ENCODE measurements at regions of chr17 and their contacts with region 1.

Region 1: GRCh38 chr17:57849874-57850754 is at the start of gene MRPS23:
- DNase-seq: peak; percentile 91 to 99 (median 95)
- ATAC-seq: peak; percentile 94
- H3K4me3 ChIP-seq: peak within 1 kb of the TSS; percentile 74 to 82
- H3K4me3 Mint-ChIP-seq: peak within 1 kb of the TSS; percentile 95
- H3K27ac ChIP-seq: peak within 1 kb of the TSS; percentile 88 to 91
- H3K27ac Mint-ChIP-seq: peak within 1 kb of the TSS; percentile 100
- H3K4me1 ChIP-seq: peaks cover 32% of the 10 kb centered on the region
- H3K4me1 Mint-ChIP-seq: peaks cover 44% of the 10 kb centered on the region
- H3K27me3 ChIP-seq: no peaks in the 10 kb centered on the region
- H3K27me3 Mint-ChIP-seq: no peaks in the 10 kb centered on the region
- CTCF ChIP-seq: no peak
- total RNA-seq, gene MRPS23: 16.2 to 17.2 TPM

Region 2: DNA sequence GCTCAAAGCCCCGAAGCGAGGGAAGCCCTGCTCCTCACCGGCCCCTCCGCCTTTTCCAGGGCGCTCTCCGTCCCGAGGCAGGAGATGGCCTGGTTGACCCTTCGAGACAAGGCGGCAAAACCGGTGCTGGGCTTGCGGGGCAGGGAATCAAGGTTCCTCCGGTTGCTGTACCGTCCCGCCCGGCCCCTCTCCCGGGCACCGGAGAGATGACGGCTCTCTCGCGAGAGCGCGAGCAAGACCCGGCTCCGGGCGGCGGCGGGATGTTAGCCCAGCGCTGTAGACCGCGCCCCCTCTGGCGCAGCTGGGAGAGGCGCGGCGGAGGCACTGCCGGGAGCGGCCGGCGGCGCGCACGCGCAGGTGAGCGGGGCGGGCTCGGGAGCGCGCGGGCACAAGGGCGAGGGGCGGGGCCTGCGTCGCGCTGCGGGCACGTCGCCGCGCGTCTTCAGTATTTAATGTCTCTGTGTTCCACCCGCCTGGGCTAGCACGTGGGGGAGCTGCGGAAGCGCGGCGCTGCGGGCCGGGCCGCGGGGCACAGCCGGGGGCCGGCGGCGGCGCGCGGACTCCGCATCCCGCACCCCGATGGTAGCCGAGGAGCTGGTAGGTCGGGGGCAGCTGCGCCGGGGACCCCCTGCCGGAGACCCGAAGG is 765.2 kb before region 1 on chr17 and contains the start of gene AKAP1:
- CTCF ChIA-PET with region 1: no interaction called
- POLR2A ChIA-PET with region 1: interaction called, 3 read pairs
- intact Hi-C with region 1: loop called in 1 of 2 experiments (anchors 1 kb)
- DNase-seq: peak; percentile 89 to 98 (median 94)
- ATAC-seq: peak; percentile 86
- H3K4me3 ChIP-seq: peak within 1 kb of the TSS; percentile 88 to 95
- H3K4me3 Mint-ChIP-seq: peak within 1 kb of the TSS; percentile 91
- H3K27ac ChIP-seq: peak within 1 kb of the TSS; percentile 87 to 93
- H3K27ac Mint-ChIP-seq: peak within 1 kb of the TSS; percentile 93
- H3K4me1 ChIP-seq: peaks cover 12% of the 10 kb centered on the region
- H3K4me1 Mint-ChIP-seq: peaks cover 38% of the 10 kb centered on the region
- H3K27me3 ChIP-seq: no peaks in the 10 kb centered on the region
- H3K27me3 Mint-ChIP-seq: no peaks in the 10 kb centered on the region
- CTCF ChIP-seq: no peak
- total RNA-seq, gene AKAP1: 20.6 to 23.5 TPM

Region 3: DNA sequence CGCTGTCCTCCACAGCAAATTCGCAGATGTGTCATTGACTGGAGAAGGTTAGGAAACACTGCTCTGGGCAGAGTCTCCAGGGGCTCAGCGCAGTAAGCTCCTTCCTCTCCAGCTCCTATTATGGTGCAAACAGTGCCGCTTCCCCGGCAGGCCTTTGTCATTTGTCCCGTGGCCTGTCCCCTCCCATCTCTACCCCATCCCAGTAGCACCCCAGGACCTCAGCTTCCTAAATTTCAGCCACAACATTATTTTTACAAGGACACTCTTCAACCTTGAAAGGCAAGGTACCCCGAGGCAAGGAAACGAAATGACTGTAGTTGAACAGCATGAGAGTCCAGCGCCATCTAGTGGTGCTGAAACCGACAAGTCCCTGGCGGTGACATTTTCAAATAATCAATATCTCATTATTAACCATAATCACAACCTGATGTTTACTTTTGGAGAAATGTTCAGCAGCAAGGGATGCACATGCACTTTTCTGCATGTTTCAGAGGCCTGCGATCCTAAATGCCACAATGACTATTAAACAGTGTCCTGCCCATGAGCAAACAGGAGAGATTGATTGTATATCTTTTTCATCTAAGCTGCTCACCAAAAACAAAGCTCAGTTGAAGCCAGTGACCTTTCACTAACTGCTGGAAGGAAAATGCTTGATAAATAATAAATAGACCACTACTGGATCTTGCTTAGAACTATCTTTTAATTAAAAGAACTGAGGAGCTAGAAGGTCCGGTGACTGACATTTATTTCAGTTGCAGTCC is 16.8 kb before region 1 on chr17:
- CTCF ChIA-PET with region 1: interaction called, 20 read pairs
- POLR2A ChIA-PET with region 1: interaction called, 9 read pairs
- intact Hi-C with region 1: no loop called
- DNase-seq: peak; percentile 42 to 83 (median 70)
- ATAC-seq: peak; percentile 70
- H3K4me3 ChIP-seq: peak overlapping the region; percentile 30 to 34
- H3K4me3 Mint-ChIP-seq: no peak overlapping the region
- H3K27ac ChIP-seq: no peak overlapping the region
- H3K27ac Mint-ChIP-seq: no peak overlapping the region
- H3K4me1 ChIP-seq: peaks cover 4% of the 10 kb centered on the region
- H3K4me1 Mint-ChIP-seq: peaks cover 7% of the 10 kb centered on the region
- H3K27me3 ChIP-seq: no peaks in the 10 kb centered on the region
- H3K27me3 Mint-ChIP-seq: no peaks in the 10 kb centered on the region
- CTCF ChIP-seq: peak; percentile 96

Region 4: DNA sequence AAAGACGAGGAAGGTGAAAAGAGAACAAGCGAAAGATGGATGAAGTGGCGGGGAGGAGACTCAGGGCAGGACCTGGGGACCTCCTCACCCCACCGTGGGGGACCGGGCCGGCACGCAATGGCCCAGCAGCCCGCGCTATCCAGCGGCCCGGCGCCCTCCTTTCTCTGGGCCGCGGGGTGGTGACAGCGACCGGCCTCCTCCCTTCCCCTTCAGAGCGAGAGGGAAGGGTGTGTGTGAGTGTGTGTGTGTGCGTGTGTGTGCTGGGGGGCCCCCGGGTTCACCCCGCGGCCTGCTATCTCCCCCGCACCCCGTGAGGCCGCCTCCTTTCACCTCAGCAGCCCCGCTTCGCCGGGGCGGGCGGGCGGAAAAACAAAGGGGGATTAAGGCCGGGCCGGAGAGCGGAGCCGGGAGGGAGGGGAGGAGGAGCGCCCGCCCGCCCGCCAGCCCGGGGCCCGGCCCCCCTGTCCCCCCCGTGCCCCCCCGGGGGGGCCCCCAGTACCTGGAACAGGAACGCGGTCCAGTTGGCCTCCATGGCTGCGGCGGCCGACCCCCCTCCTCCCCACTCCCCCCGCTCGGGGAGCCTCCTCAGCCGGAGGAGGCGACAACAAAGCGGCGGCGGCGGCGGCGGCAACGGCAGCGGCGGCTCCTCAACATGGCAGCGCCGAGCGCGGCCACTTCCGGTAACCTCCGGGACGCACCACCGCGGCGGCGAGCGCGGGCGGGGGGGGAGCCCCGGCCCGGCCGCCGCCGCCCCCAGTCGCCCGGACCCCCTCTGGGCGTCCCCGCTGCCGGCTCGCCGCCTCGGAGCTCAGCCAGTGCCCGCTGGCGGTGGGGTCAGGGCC is 137.7 kb after region 1 on chr17 and contains the start of gene VEZF1:
- CTCF ChIA-PET with region 1: interaction called, 3 read pairs
- POLR2A ChIA-PET with region 1: interaction called, 5 read pairs
- intact Hi-C with region 1: loop called (anchors 1 kb)
- DNase-seq: peak; percentile 53 to 91 (median 79)
- ATAC-seq: peak; percentile 67
- H3K4me3 ChIP-seq: peak within 1 kb of the TSS; percentile 83 to 90
- H3K4me3 Mint-ChIP-seq: peak within 1 kb of the TSS; percentile 94
- H3K27ac ChIP-seq: peak within 1 kb of the TSS; percentile 57 to 72
- H3K27ac Mint-ChIP-seq: peak within 1 kb of the TSS; percentile 93
- H3K4me1 ChIP-seq: peaks cover 49% of the 10 kb centered on the region
- H3K4me1 Mint-ChIP-seq: peaks cover 63% of the 10 kb centered on the region
- H3K27me3 ChIP-seq: no peaks in the 10 kb centered on the region
- H3K27me3 Mint-ChIP-seq: no peaks in the 10 kb centered on the region
- CTCF ChIP-seq: no peak
- total RNA-seq, gene VEZF1: 45.2 to 46.6 TPM

Region 5: GRCh38 chr17:58156839-58157803 is 307.0 kb after region 1 on chr17:
- CTCF ChIA-PET with region 1: no interaction called
- POLR2A ChIA-PET with region 1: interaction called, 4 read pairs
- intact Hi-C with region 1: loop called in 1 of 2 experiments (anchors 2 kb)
- DNase-seq: peak; percentile 19 to 81 (median 56)
- ATAC-seq: peak; percentile 54
- H3K4me3 ChIP-seq: peak overlapping the region; percentile 73 to 79
- H3K4me3 Mint-ChIP-seq: peak overlapping the region; percentile 85
- H3K27ac ChIP-seq: peak overlapping the region; percentile 84 to 92
- H3K27ac Mint-ChIP-seq: peak overlapping the region; percentile 87
- H3K4me1 ChIP-seq: peaks cover 60% of the 10 kb centered on the region
- H3K4me1 Mint-ChIP-seq: peaks cover 69% of the 10 kb centered on the region
- H3K27me3 ChIP-seq: no peaks in the 10 kb centered on the region
- H3K27me3 Mint-ChIP-seq: no peaks in the 10 kb centered on the region
- CTCF ChIP-seq: no peak